Activated CD4-positive, alpha-beta memory T cell treated with anti-CD3 and anti-CD28 coated beads for 36 hours (primary cell): ENCODE measurements at regions of chr7 and their contacts with region 1.

Region 1: DNA sequence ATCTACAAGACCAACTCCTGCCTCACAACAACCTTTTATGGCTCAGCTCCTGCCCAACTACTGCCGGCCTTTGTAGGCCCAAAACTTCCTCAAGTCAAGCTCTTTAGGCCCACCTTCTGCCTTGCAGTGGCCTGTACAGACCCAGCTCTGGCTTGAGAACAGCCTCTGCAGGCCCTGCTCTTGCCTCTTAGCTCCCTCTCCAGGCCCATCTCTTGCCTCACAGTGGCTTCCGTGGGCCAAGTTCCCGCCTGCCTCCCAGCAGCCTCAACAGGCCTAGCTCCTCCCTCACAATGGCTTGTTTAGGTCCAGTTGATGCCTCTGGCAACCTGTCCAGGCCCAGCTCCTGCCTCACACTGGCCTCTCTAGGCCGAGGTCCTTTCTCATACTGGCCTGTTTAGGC is 32.4 kb upstream of the VKORC1L1 start:
- DNase-seq: peak; percentile 50
- H3K4me3 Mint-ChIP-seq: no peak overlapping the region
- H3K27ac Mint-ChIP-seq: no peak overlapping the region
- H3K4me1 Mint-ChIP-seq: peaks cover 2% of the 10 kb centered on the region
- H3K27me3 Mint-ChIP-seq: no peaks in the 10 kb centered on the region

Region 2: DNA sequence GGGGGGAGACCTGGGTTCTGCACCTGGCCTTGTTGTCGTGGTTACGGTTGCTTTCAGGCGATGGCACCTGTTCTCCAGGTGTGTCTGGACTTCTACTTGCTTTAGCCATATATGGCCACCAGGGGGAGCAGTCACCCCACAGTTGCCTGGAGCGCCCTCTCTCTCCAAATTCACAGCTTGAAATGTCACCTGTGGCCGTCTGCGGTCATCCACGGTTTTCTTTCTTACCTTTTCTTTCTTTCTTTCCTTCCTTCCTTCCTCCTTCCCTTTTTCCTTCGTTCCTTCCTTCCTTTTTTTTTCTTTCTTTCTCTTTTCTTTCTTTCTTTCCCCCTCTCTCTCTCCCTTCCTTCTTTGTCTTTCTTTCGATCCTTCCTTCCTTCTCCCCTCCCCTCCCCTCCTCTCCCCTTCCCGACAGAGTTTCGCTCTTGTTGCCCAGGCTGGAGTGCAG is 118.1 kb before region 1 on chr7:
- CTCF ChIA-PET with region 1: interaction called, 18 read pairs
- POLR2A ChIA-PET with region 1: no interaction called
- intact Hi-C with region 1: no loop called
- DNase-seq: peak; percentile 78
- H3K4me3 Mint-ChIP-seq: no peak overlapping the region
- H3K27ac Mint-ChIP-seq: no peak overlapping the region
- H3K4me1 Mint-ChIP-seq: no peaks in the 10 kb centered on the region
- H3K27me3 Mint-ChIP-seq: no peaks in the 10 kb centered on the region